ENCODE measurements at regions of chr1 and their contacts with region 1.

Region 1: GRCh38 chr1:226736908-226737818 is 1.9 kb downstream of the ITPKB start:
- DNase-seq: peak; percentile 41
- H3K4me3 Mint-ChIP-seq: peak overlapping the region; percentile 90
- H3K27ac Mint-ChIP-seq: peak overlapping the region; percentile 86
- H3K4me1 Mint-ChIP-seq: peaks cover 50% of the 10 kb centered on the region
- H3K27me3 Mint-ChIP-seq: peaks cover 1% of the 10 kb centered on the region

Region 2: GRCh38 chr1:226407497-226408284 is 329.5 kb before region 1 on chr1 and contains the start of gene PARP1:
- intact Hi-C with region 1: loop called (anchors 1 kb)
- DNase-seq: peak; percentile 90
- H3K4me3 Mint-ChIP-seq: peak within 1 kb of the TSS; percentile 99
- H3K27ac Mint-ChIP-seq: peak within 1 kb of the TSS; percentile 97
- H3K4me1 Mint-ChIP-seq: peaks cover 44% of the 10 kb centered on the region
- H3K27me3 Mint-ChIP-seq: peaks cover 8% of the 10 kb centered on the region
- total RNA-seq, gene PARP1: 209 and 220 TPM in 2 replicates

Region 3: DNA sequence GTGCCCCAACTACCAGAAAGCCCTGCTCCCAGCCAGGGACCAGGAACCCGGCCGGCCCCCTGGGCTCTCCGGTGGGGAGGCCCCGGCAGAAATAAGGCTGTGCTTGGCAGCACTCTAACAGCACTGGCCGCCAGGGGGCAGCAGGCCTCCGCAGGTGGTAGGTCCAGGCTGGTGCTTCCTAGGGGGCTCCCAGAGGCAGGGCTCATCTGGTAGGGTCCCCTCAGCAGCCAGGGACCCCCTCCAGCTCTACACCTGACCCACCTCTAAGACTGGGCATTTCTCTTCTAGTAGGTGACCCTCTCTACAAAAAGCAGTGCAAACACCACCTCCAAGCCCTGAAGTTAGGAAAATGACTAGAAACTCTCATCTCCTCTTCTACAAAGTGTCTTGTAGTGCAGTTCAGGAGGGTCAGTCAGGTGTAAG is 103.0 kb before region 1 on chr1:
- intact Hi-C with region 1: loop called (anchors 1 kb)
- DNase-seq: peak; percentile 66
- H3K4me3 Mint-ChIP-seq: no peak overlapping the region
- H3K27ac Mint-ChIP-seq: peak overlapping the region; percentile 31
- H3K4me1 Mint-ChIP-seq: peaks cover 34% of the 10 kb centered on the region
- H3K27me3 Mint-ChIP-seq: no peaks in the 10 kb centered on the region

Region 4: GRCh38 chr1:226687426-226687825 is 49.7 kb before region 1 on chr1:
- intact Hi-C with region 1: loop called (anchors 1 kb)
- DNase-seq: no peak
- H3K4me3 Mint-ChIP-seq: peak overlapping the region; percentile 29
- H3K27ac Mint-ChIP-seq: peak overlapping the region; percentile 83
- H3K4me1 Mint-ChIP-seq: peaks cover 97% of the 10 kb centered on the region
- H3K27me3 Mint-ChIP-seq: no peaks in the 10 kb centered on the region

Region 5: GRCh38 chr1:226723657-226724532 is 13.3 kb before region 1 on chr1:
- intact Hi-C with region 1: loop called (anchors 1 kb)
- DNase-seq: no peak
- H3K4me3 Mint-ChIP-seq: peak overlapping the region; percentile 73
- H3K27ac Mint-ChIP-seq: peak overlapping the region; percentile 93
- H3K4me1 Mint-ChIP-seq: peaks cover 84% of the 10 kb centered on the region
- H3K27me3 Mint-ChIP-seq: no peaks in the 10 kb centered on the region

Region 6: DNA sequence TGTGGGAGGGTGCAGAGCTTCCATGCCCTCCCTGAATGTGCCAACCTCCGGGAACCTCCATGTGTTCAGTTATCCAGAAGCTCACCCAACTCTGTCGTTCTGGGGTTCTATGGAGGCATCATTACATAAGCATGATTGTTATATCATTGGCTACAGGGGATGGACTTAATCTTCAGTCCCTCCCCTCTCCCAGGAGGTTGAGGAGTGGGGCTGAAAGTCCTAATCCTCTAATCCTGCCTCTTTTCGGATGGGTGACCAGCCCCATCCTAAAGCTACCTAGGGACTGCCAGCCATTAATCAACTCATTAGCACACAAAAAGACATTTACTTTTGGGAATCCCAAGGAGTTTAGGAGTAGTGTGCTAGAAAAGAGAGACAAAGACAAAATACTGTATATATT is 101.3 kb after region 1 on chr1:
- intact Hi-C with region 1: no loop called
- DNase-seq: no peak
- H3K4me3 Mint-ChIP-seq: no peak overlapping the region
- H3K27ac Mint-ChIP-seq: no peak overlapping the region
- H3K4me1 Mint-ChIP-seq: no peaks in the 10 kb centered on the region
- H3K27me3 Mint-ChIP-seq: no peaks in the 10 kb centered on the region

Region 7: GRCh38 chr1:226882631-226883409 is 145.7 kb after region 1 on chr1:
- intact Hi-C with region 1: loop called (anchors 2 kb)
- DNase-seq: peak; percentile 40
- H3K4me3 Mint-ChIP-seq: peak overlapping the region; percentile 48
- H3K27ac Mint-ChIP-seq: peak overlapping the region; percentile 87
- H3K4me1 Mint-ChIP-seq: peaks cover 60% of the 10 kb centered on the region
- H3K27me3 Mint-ChIP-seq: no peaks in the 10 kb centered on the region